ENCODE measurements at regions of chr12 and their contacts with region 1.

Region 1: GRCh38 chr12:115683240-115683780 is 594.2 kb downstream of the MED13L start:
- DNase-seq: no peak

Region 2: GRCh38 chr12:115324949-115325593 is 358.2 kb before region 1 on chr12:
- intact Hi-C with region 1: loop called in 1 of 2 experiments (anchors 2 kb)
- DNase-seq: no peak